ENCODE measurements at regions of chr10 and their contacts with region 1.

Region 1: DNA sequence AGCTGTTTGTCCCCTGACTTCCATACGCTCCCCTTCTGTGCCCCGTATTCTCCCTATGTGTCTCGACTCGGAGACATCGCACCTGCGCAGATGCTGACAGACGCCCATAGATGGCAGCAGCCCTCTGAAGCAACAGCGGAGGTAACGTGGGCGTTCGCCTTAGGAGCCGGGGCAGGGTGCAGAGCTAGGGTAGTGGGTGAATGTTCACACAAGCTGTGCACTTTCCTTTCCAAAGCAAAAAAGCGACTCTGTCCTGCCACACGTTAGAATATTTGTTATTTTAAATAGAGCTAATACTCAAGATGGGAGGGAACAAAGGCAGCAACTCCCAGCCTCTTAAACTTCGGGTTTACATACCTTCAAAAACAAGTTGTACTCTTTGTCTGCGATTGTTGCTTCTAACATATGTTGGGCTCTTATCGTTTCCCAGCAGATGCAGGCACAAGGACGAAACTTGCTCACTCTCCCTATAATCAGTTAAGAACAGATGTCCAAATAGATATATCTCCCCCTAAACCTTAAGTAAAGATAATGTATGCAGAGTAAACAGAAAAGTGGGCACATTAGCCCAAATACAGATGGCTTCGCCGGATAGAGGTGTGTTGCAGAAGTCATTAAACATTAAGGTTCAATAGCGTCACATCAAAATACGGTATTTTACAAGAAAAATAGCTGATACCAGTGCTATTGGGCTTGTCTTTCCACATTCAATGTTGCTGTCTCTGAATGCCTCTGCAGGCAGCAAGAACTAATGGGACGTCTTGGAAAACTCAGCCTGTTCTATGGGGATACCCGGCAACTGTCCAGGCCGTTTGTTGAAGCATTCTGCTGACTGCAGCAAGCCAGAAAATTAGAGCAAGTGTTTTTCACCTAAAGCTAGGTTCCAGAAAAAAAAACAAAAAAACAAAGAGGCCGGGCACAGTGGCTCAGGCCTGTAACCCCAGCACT is 340.3 kb upstream of the PRKCQ start:
- DNase-seq: peak; percentile 61 to 85 (median 62)
- H3K4me3 ChIP-seq: peak overlapping the region; percentile 5
- H3K4me3 Mint-ChIP-seq: peak overlapping the region in 6 of 7 donors; percentile 1 to 75 (median 49)
- H3K27ac ChIP-seq: peak overlapping the region; percentile 51
- H3K27ac Mint-ChIP-seq: peak overlapping the region in 2 of 8 donors; percentile 10 to 63
- H3K4me1 ChIP-seq: peaks cover 17% of the 10 kb centered on the region
- H3K4me1 Mint-ChIP-seq: peaks cover 22 to 37% (median 31%) of the 10 kb centered on the region in 3 donors
- H3K27me3 ChIP-seq: no peaks in the 10 kb centered on the region
- H3K27me3 Mint-ChIP-seq: peaks cover 0 to 2% of the 10 kb centered on the region in 2 donors

Region 2: GRCh38 chr10:6936931-6937330 is 16.6 kb after region 1 on chr10:
- CTCF ChIA-PET with region 1: interaction called, 22 read pairs
- POLR2A ChIA-PET with region 1: no interaction called
- DNase-seq: no peak
- H3K4me3 ChIP-seq: no peak overlapping the region
- H3K4me3 Mint-ChIP-seq: no peak overlapping the region
- H3K27ac ChIP-seq: no peak overlapping the region
- H3K27ac Mint-ChIP-seq: no peak overlapping the region
- H3K4me1 ChIP-seq: no peaks in the 10 kb centered on the region
- H3K4me1 Mint-ChIP-seq: peaks cover 0 to 1% (median 0%) of the 10 kb centered on the region in 3 donors
- H3K27me3 ChIP-seq: no peaks in the 10 kb centered on the region
- H3K27me3 Mint-ChIP-seq: peaks cover 3 to 5% of the 10 kb centered on the region in 2 donors

Region 3: DNA sequence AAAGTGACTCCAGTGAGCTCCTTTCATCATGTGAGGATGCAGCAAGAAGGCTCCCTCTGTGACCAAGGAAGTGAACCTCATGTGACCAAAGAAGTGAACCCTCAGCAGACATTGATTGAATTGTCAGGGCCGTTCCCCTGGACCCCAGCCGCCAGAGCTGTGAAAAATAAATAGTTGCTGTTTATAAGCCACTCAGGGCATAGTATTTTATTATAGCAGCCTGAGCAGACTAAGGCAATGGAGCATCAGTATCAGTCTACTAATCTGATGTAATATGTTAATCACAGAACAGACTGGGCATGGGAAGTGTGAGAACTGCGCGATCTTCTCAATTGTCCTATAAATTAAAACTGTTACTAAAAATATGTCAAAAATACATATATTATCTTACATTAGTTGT is 44.2 kb after region 1 on chr10:
- CTCF ChIA-PET with region 1: no interaction called
- POLR2A ChIA-PET with region 1: no interaction called
- DNase-seq: no peak
- H3K4me3 ChIP-seq: no peak overlapping the region
- H3K4me3 Mint-ChIP-seq: no peak overlapping the region
- H3K27ac ChIP-seq: no peak overlapping the region
- H3K27ac Mint-ChIP-seq: no peak overlapping the region
- H3K4me1 ChIP-seq: no peaks in the 10 kb centered on the region
- H3K4me1 Mint-ChIP-seq: peaks cover 0 to 9% (median 4%) of the 10 kb centered on the region in 3 donors
- H3K27me3 ChIP-seq: no peaks in the 10 kb centered on the region
- H3K27me3 Mint-ChIP-seq: peaks cover 0 to 2% of the 10 kb centered on the region in 2 donors

Region 4: GRCh38 chr10:7258948-7259523 is 338.7 kb after region 1 on chr10:
- CTCF ChIA-PET with region 1: interaction called, 10 read pairs
- POLR2A ChIA-PET with region 1: no interaction called
- DNase-seq: peak; percentile 51 to 88 (median 77)
- H3K4me3 ChIP-seq: peak overlapping the region; percentile 7
- H3K4me3 Mint-ChIP-seq: peak overlapping the region; percentile 11 to 85 (median 70)
- H3K27ac ChIP-seq: no peak overlapping the region
- H3K27ac Mint-ChIP-seq: peak overlapping the region; percentile 75 to 96 (median 91)
- H3K4me1 ChIP-seq: peaks cover 33% of the 10 kb centered on the region
- H3K4me1 Mint-ChIP-seq: peaks cover 54 to 72% (median 57%) of the 10 kb centered on the region in 3 donors
- H3K27me3 ChIP-seq: no peaks in the 10 kb centered on the region
- H3K27me3 Mint-ChIP-seq: peaks cover 0 to 4% of the 10 kb centered on the region in 2 donors

Region 5: GRCh38 chr10:7417103-7417623 is 496.8 kb after region 1 on chr10:
- CTCF ChIA-PET with region 1: interaction called, 40 read pairs
- POLR2A ChIA-PET with region 1: interaction called, 5 read pairs
- DNase-seq: peak in 2 of 5 donors; percentile 36 to 45
- H3K4me3 ChIP-seq: no peak overlapping the region
- H3K4me3 Mint-ChIP-seq: peak overlapping the region in 1 of 7 donors; percentile 66
- H3K27ac ChIP-seq: no peak overlapping the region
- H3K27ac Mint-ChIP-seq: peak overlapping the region in 1 of 8 donors; percentile 76
- H3K4me1 ChIP-seq: peaks cover 12% of the 10 kb centered on the region
- H3K4me1 Mint-ChIP-seq: peaks cover 14 to 21% (median 17%) of the 10 kb centered on the region in 3 donors
- H3K27me3 ChIP-seq: no peaks in the 10 kb centered on the region
- H3K27me3 Mint-ChIP-seq: peaks cover 0 to 4% of the 10 kb centered on the region in 2 donors

Region 6: GRCh38 chr10:7687228-7687907 is 767.0 kb after region 1 on chr10:
- CTCF ChIA-PET with region 1: interaction called, 11 read pairs
- POLR2A ChIA-PET with region 1: no interaction called
- DNase-seq: peak; percentile 51 to 84 (median 67)
- H3K4me3 ChIP-seq: no peak overlapping the region
- H3K4me3 Mint-ChIP-seq: peak overlapping the region in 2 of 7 donors; percentile 1 to 48
- H3K27ac ChIP-seq: no peak overlapping the region
- H3K27ac Mint-ChIP-seq: peak overlapping the region in 2 of 8 donors; percentile 2 to 35
- H3K4me1 ChIP-seq: no peaks in the 10 kb centered on the region
- H3K4me1 Mint-ChIP-seq: peaks cover 4 to 7% (median 6%) of the 10 kb centered on the region in 3 donors
- H3K27me3 ChIP-seq: no peaks in the 10 kb centered on the region
- H3K27me3 Mint-ChIP-seq: peaks cover 16 to 25% of the 10 kb centered on the region in 2 donors

Region 7: DNA sequence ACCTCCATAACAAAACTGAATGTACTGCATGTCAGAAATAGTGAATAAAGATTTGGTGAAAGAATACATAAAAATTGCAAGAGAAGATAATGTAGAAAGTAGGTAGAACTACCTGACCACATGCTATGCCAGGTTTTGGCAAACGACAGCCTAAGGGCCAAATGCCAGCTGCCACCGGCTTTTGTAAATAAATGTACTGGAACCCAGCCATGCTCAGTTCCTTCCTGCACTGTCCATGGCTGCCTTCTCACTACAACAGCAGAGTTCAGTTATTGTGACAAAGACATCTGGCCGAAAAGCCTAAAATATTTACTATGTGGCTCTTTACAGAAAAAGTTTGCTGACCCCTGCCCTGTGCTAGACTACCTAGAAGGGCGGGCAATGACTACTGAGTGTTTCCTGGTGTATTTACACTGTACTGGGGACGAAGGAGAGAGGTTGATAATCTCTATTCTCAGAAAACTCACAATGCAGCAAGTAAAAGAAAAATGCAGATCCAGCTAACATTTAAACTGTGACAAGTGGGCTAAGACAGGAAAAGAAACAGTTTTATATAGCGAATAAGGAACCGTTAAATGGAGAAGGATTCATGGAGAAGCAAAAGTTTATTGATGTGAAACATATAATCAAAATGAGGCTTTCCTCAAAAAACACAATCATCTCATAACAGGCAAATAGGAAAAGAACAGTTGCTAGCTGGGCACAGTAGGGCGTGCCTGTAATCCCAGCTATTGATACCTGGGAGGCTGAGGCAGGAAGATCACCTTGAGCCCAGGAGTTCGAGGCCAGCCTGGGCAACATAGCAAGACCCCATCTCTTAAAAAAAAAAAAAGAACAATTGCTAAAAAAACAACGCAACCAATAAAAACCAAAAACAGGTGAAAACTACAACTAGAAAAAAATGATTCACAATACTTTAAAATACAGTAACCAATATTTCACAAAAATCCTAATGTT is 853.8 kb after region 1 on chr10:
- CTCF ChIA-PET with region 1: no interaction called
- POLR2A ChIA-PET with region 1: no interaction called
- DNase-seq: no peak
- H3K4me3 ChIP-seq: no peak overlapping the region
- H3K4me3 Mint-ChIP-seq: no peak overlapping the region
- H3K27ac ChIP-seq: no peak overlapping the region
- H3K27ac Mint-ChIP-seq: peak overlapping the region in 1 of 8 donors; percentile 29
- H3K4me1 ChIP-seq: no peaks in the 10 kb centered on the region
- H3K4me1 Mint-ChIP-seq: peaks cover 0 to 2% (median 0%) of the 10 kb centered on the region in 3 donors
- H3K27me3 ChIP-seq: no peaks in the 10 kb centered on the region
- H3K27me3 Mint-ChIP-seq: peaks cover 0 to 1% of the 10 kb centered on the region in 2 donors

Measured in CD8-positive, alpha-beta memory T cell (primary cell).